AG04449 (cell line): ENCODE measurements at regions of chr15 and their contacts with region 1.

Region 1: GRCh38 chr15:72231066-72231846 is at the start of gene PKM:
- DNase-seq: peak; percentile 88
- H3K4me3 ChIP-seq: peak within 1 kb of the TSS; percentile 95
- CTCF ChIP-seq: no peak

Region 2: GRCh38 chr15:72047020-72047419 is 184.2 kb before region 1 on chr15:
- CTCF ChIA-PET with region 1: no interaction called
- POLR2A ChIA-PET with region 1: no interaction called
- DNase-seq: no peak
- H3K4me3 ChIP-seq: no peak overlapping the region
- CTCF ChIP-seq: no peak

Region 3: DNA sequence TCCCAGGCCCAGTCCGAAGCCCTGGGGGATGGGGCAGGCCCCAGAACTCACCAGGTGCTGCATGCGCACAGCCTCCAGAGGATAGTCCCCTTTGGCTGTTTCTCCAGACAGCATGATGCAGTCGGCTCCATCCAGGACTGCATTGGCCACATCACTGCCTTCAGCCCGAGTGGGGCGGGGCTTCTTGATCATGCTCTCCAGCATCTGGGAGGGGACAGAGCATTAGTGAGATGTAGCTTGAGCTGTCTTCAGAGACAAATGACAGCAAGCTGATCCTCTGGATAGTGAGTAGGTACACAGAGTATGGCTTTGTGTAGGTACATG is 24.6 kb before region 1 on chr15:
- CTCF ChIA-PET with region 1: interaction called, 19 read pairs
- POLR2A ChIA-PET with region 1: interaction called, 8 read pairs
- DNase-seq: no peak
- H3K4me3 ChIP-seq: no peak overlapping the region
- CTCF ChIP-seq: no peak

Region 4: GRCh38 chr15:72217216-72217615 is 14.0 kb before region 1 on chr15:
- CTCF ChIA-PET with region 1: interaction called, 19 read pairs
- POLR2A ChIA-PET with region 1: interaction called, 14 read pairs
- DNase-seq: no peak
- H3K4me3 ChIP-seq: no peak overlapping the region
- CTCF ChIP-seq: no peak